Activated B cell treated with CpG ODN at 0.5 μM for 24 hours (primary cell): ENCODE measurements at regions of chr10 and their contacts with region 1.

Region 1: DNA sequence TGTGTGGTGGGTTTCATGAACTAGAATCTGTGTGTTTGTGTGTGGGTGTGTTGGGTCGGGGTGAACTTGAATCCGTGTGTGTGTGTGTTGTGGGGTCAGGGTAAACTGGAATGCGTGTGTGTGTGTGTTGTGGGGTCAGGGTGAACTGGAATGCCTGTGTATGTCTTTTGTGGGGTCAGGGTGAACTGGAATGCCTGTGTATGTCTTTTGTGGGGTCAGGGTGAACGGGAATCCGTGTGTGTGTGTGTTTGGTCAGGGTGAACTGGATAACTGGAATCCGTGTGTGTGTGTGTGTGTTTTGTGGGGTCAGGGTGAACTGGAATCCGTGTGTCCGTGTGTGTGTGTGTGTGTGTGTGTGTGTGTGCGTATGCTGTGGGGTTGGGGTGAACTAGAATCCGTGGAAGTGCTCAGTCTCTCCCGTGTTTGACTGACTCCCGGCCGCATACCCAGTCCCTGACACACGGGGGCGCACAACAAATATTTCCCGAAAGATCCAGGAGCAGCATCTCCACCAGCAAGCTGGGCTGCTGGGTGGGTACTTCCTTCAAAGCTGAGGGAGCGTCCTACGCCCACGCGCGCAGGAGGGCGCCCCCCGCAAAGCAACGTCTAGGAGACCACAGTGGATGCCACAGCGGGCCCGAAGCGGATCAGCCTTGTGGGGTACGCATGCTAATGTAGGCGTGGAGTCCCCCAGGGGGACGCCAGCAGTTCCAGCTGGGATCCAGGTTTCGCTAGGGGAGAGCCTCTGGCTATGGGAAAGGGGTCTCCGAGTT is 836 bp upstream of the CASP7 start:
- DNase-seq: peak; percentile 68
- ATAC-seq: peak; percentile 9
- H3K4me3 Mint-ChIP-seq: peak overlapping the region; percentile 92
- H3K27ac Mint-ChIP-seq: peak overlapping the region; percentile 94
- H3K4me1 Mint-ChIP-seq: peaks cover 48% of the 10 kb centered on the region
- H3K27me3 Mint-ChIP-seq: no peaks in the 10 kb centered on the region
- CTCF ChIP-seq: no peak

Region 2: DNA sequence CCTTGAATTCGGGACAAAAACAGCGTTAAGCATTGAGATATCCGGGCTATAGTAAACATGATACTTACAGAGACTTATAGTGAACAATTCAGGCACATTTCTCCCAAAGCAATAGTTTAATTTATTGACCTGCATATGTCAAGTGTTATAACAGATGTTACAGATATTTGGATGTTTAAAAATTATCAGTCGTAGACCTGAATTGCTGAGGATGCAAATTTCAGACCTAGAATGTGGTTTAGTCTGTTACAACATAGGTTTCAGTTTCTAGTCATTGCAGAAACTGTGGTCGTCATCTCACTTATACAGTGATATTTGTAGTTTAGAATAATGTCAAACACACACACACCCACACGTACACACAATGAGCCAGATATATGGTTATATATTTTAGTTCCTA is 1146.7 kb before region 1 on chr10:
- CTCF ChIA-PET with region 1: no interaction called
- POLR2A ChIA-PET with region 1: no interaction called
- intact Hi-C with region 1: loop called (anchors 5 kb)
- DNase-seq: no peak
- ATAC-seq: peak; percentile 71
- H3K4me3 Mint-ChIP-seq: peak overlapping the region; percentile 76
- H3K27ac Mint-ChIP-seq: peak overlapping the region; percentile 3
- H3K4me1 Mint-ChIP-seq: peaks cover 28% of the 10 kb centered on the region
- H3K27me3 Mint-ChIP-seq: no peaks in the 10 kb centered on the region
- CTCF ChIP-seq: no peak

Region 3: GRCh38 chr10:113441220-113441619 is 237.7 kb before region 1 on chr10:
- CTCF ChIA-PET with region 1: no interaction called
- POLR2A ChIA-PET with region 1: no interaction called
- intact Hi-C with region 1: no loop called
- DNase-seq: no peak
- ATAC-seq: no peak
- H3K4me3 Mint-ChIP-seq: no peak overlapping the region
- H3K27ac Mint-ChIP-seq: no peak overlapping the region
- H3K4me1 Mint-ChIP-seq: no peaks in the 10 kb centered on the region
- H3K27me3 Mint-ChIP-seq: peaks cover 3% of the 10 kb centered on the region
- CTCF ChIP-seq: no peak

Region 4: GRCh38 chr10:113775686-113776294 is 96.9 kb after region 1 on chr10:
- CTCF ChIA-PET with region 1: no interaction called
- POLR2A ChIA-PET with region 1: no interaction called
- intact Hi-C with region 1: loop called (anchors 5 kb)
- DNase-seq: no peak
- ATAC-seq: no peak
- H3K4me3 Mint-ChIP-seq: no peak overlapping the region
- H3K27ac Mint-ChIP-seq: no peak overlapping the region
- H3K4me1 Mint-ChIP-seq: no peaks in the 10 kb centered on the region
- H3K27me3 Mint-ChIP-seq: peaks cover 11% of the 10 kb centered on the region
- CTCF ChIP-seq: no peak

Region 5: GRCh38 chr10:114095559-114096337 is 416.9 kb after region 1 on chr10:
- CTCF ChIA-PET with region 1: no interaction called
- POLR2A ChIA-PET with region 1: no interaction called
- intact Hi-C with region 1: loop called (anchors 2 kb)
- DNase-seq: no peak
- ATAC-seq: peak; percentile 51
- H3K4me3 Mint-ChIP-seq: peak overlapping the region; percentile 49
- H3K27ac Mint-ChIP-seq: peak overlapping the region; percentile 22
- H3K4me1 Mint-ChIP-seq: peaks cover 61% of the 10 kb centered on the region
- H3K27me3 Mint-ChIP-seq: peaks cover 9% of the 10 kb centered on the region
- CTCF ChIP-seq: no peak

Region 6: GRCh38 chr10:114499630-114500190 is 820.8 kb after region 1 on chr10:
- CTCF ChIA-PET with region 1: no interaction called
- POLR2A ChIA-PET with region 1: no interaction called
- intact Hi-C with region 1: loop called (anchors 1 kb)
- DNase-seq: peak; percentile 37
- ATAC-seq: peak; percentile 49
- H3K4me3 Mint-ChIP-seq: peak overlapping the region; percentile 67
- H3K27ac Mint-ChIP-seq: peak overlapping the region; percentile 96
- H3K4me1 Mint-ChIP-seq: peaks cover 83% of the 10 kb centered on the region
- H3K27me3 Mint-ChIP-seq: no peaks in the 10 kb centered on the region
- CTCF ChIP-seq: no peak

Region 7: DNA sequence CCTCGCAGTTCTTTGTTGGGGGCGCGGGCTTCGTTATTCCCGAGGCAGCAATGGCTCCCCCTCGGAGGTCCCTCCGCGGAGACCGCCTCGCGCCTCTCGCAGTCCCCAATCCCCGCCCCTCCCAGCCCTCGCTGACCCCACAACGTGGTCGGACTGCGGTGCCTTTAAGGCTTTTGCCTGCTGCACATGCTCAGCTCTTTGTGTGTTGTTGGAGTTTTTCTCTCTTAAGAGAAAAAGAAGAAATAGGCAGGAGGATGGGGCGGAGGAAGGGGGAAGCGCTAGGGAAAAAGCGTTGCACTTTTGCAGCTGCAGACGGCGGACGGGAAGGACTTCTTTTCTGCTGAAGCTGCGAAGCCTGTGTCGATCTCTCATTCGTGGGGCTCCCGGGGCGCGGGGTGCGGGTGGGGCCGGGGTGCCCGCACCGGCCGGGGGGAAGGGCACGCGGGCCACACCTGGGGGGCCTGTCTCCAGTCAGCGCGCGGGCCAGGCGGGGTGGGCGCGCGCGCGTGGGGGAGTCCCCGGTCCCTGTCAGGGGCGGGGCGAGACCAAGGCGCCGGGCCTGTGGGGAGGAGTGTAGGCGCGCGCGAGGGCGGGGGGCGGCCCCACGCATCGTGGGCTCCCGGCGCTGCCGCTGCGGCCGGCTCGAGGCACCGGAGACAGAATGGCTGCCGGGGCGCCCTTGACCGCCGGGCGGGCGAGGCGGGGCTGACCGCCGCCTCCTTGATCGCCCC is 1413.8 kb after region 1 on chr10:
- CTCF ChIA-PET with region 1: no interaction called
- POLR2A ChIA-PET with region 1: no interaction called
- intact Hi-C with region 1: loop called (anchors 5 kb)
- DNase-seq: peak; percentile 60
- ATAC-seq: peak; percentile 84
- H3K4me3 Mint-ChIP-seq: peak overlapping the region; percentile 85
- H3K27ac Mint-ChIP-seq: no peak overlapping the region
- H3K4me1 Mint-ChIP-seq: peaks cover 13% of the 10 kb centered on the region
- H3K27me3 Mint-ChIP-seq: peaks cover 35% of the 10 kb centered on the region
- CTCF ChIP-seq: no peak